CD8-positive, alpha-beta T cell (primary cell): ENCODE measurements at regions of chr10 and their contacts with region 1.

Region 1: GRCh38 chr10:37857287-37858211 is at the start of gene ZNF248:
- DNase-seq: peak; percentile 89 to 98 (median 94)
- ATAC-seq: peak; percentile 96
- H3K4me3 ChIP-seq: peak within 1 kb of the TSS; percentile 86 to 96
- H3K4me3 Mint-ChIP-seq: peak within 1 kb of the TSS; percentile 91
- H3K27ac ChIP-seq: peak within 1 kb of the TSS; percentile 89 to 96
- H3K27ac Mint-ChIP-seq: peak within 1 kb of the TSS; percentile 99
- H3K4me1 ChIP-seq: peaks cover 27% of the 10 kb centered on the region
- H3K4me1 Mint-ChIP-seq: peaks cover 41% of the 10 kb centered on the region
- H3K27me3 ChIP-seq: no peaks in the 10 kb centered on the region
- H3K27me3 Mint-ChIP-seq: no peaks in the 10 kb centered on the region
- CTCF ChIP-seq: no peak
- total RNA-seq, gene ZNF248: 2.3 to 2.9 TPM

Region 2: DNA sequence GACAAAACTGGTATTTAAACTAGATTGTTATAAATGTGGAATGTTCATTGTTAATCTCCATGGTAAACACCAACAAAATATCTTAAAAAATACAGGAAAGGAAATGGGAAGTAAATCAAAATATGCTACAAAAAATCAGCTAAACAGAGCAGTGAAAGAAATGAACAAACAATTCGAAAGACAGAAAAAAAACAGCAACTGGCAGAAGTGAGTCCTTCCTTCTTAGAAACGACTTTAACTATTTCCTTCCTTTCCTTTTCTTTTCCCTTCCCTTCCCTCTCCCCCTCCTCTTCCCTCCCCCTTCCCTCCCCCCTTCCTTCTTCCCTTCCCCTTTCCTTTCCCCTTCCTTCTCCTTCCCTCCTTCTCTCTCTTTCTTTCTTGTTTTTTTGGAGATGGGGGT is 12.9 kb before region 1 on chr10:
- CTCF ChIA-PET with region 1: no interaction called
- POLR2A ChIA-PET with region 1: no interaction called
- intact Hi-C with region 1: no loop called
- DNase-seq: no peak
- ATAC-seq: no peak
- H3K4me3 ChIP-seq: no peak overlapping the region
- H3K4me3 Mint-ChIP-seq: no peak overlapping the region
- H3K27ac ChIP-seq: no peak overlapping the region
- H3K27ac Mint-ChIP-seq: no peak overlapping the region
- H3K4me1 ChIP-seq: no peaks in the 10 kb centered on the region
- H3K4me1 Mint-ChIP-seq: peaks cover 5% of the 10 kb centered on the region
- H3K27me3 ChIP-seq: no peaks in the 10 kb centered on the region
- H3K27me3 Mint-ChIP-seq: no peaks in the 10 kb centered on the region
- CTCF ChIP-seq: no peak

Region 3: GRCh38 chr10:38010119-38010903 is 152.8 kb after region 1 on chr10 and contains the start of gene ZNF33A:
- CTCF ChIA-PET with region 1: no interaction called
- POLR2A ChIA-PET with region 1: interaction called, 4 read pairs
- intact Hi-C with region 1: loop called (anchors 1 kb)
- DNase-seq: peak; percentile 79 to 98 (median 91)
- ATAC-seq: peak; percentile 82
- H3K4me3 ChIP-seq: peak within 1 kb of the TSS; percentile 74 to 78
- H3K4me3 Mint-ChIP-seq: peak within 1 kb of the TSS; percentile 81
- H3K27ac ChIP-seq: peak within 1 kb of the TSS; percentile 98 to 99
- H3K27ac Mint-ChIP-seq: peak within 1 kb of the TSS; percentile 100
- H3K4me1 ChIP-seq: peaks cover 14% of the 10 kb centered on the region
- H3K4me1 Mint-ChIP-seq: peaks cover 39% of the 10 kb centered on the region
- H3K27me3 ChIP-seq: no peaks in the 10 kb centered on the region
- H3K27me3 Mint-ChIP-seq: no peaks in the 10 kb centered on the region
- CTCF ChIP-seq: no peak
- total RNA-seq, gene ZNF33A: 24.6 to 25.9 TPM